ENCODE measurements at regions of chr3 and their contacts with region 1.

Region 1: DNA sequence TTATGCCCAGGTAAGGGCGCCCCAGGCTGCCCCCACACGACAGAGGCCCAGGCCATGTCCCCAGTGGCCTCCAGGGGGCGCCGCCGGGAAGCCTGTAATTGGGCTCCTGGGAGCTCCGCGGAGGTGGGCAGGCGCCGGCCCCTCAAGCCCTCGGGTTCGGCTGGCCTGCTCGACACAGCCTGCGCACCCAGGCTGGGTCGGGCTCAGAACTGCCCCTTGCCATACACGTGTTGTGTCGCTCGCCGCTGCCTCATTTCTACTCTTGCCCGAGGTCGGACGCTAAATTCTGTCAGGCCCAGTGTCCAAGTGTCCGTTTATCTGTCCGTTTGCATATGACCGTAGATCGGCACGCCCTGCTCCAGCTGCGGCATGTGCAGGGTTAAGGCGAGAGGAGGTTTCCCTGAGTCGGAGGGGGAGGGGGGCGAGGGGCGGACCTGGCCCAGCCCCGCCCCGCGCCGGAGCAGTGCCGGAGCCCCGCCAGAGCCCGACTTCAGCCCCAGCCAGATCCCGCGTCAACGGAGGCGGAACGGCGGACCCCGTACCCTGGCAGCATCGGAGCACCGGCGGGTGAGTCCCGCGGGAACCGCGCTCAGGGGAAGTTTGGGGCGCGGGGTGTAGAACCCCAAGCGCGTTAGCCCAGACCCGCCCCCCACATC is at the start of gene KLHDC8B:
- DNase-seq: peak; percentile 59 to 98
- H3K4me3 ChIP-seq: peak within 1 kb of the TSS; percentile 66 to 94 (median 78)
- H3K27ac ChIP-seq: no peak within 1 kb of the TSS
- H3K4me1 ChIP-seq: peaks cover 0 to 29% (median 15%) of the 10 kb centered on the region in 4 experiments; a peak in 6 of 7 replicates
- H3K27me3 ChIP-seq: peaks cover 0 to 3% (median 0%) of the 10 kb centered on the region in 4 experiments; a peak in 2 of 7 replicates
- CTCF ChIP-seq: peak in 2 of 3 experiments; percentile 88 to 95; a peak in 3 of 4 replicates
- EP300 ChIP-seq: no peak
- POLR2A ChIP-seq: no peak
- RAD21 ChIP-seq: peak; percentile 72 to 85
- total RNA-seq, gene KLHDC8B: 15.8 and 18.1 TPM in 2 replicates

Region 2: GRCh38 chr3:48997714-48998641 is 173.3 kb before region 1 on chr3:
- CTCF ChIA-PET with region 1: no interaction called
- POLR2A ChIA-PET with region 1: no interaction called
- DNase-seq: peak in 1 of 2 experiments; percentile 63
- H3K4me3 ChIP-seq: no peak overlapping the region
- H3K27ac ChIP-seq: no peak overlapping the region
- H3K4me1 ChIP-seq: peaks cover 0 to 17% (median 7%) of the 10 kb centered on the region in 4 experiments; a peak in 5 of 7 replicates
- H3K27me3 ChIP-seq: no peaks in the 10 kb centered on the region
- CTCF ChIP-seq: no peak
- EP300 ChIP-seq: no peak
- POLR2A ChIP-seq: no peak
- RAD21 ChIP-seq: no peak

Region 3: GRCh38 chr3:49181351-49181750 is 10.1 kb after region 1 on chr3:
- CTCF ChIA-PET with region 1: interaction called, 17 read pairs
- POLR2A ChIA-PET with region 1: interaction called, 4 read pairs
- DNase-seq: no peak
- H3K4me3 ChIP-seq: no peak overlapping the region
- H3K27ac ChIP-seq: no peak overlapping the region
- H3K4me1 ChIP-seq: no peaks in the 10 kb centered on the region
- H3K27me3 ChIP-seq: no peaks in the 10 kb centered on the region
- CTCF ChIP-seq: no peak
- EP300 ChIP-seq: no peak
- POLR2A ChIP-seq: no peak
- RAD21 ChIP-seq: no peak

Region 4: GRCh38 chr3:49191741-49192140 is 20.5 kb after region 1 on chr3:
- CTCF ChIA-PET with region 1: interaction called, 12 read pairs
- POLR2A ChIA-PET with region 1: interaction called, 4 read pairs
- DNase-seq: no peak
- H3K4me3 ChIP-seq: no peak overlapping the region
- H3K27ac ChIP-seq: no peak overlapping the region
- H3K4me1 ChIP-seq: 0 out of 7 replicates have a peak, but pooled peaks cover 0 to 3% (median 0%) of the 10 kb centered on the region in 4 experiments
- H3K27me3 ChIP-seq: no peaks in the 10 kb centered on the region
- CTCF ChIP-seq: no peak
- EP300 ChIP-seq: no peak
- POLR2A ChIP-seq: no peak
- RAD21 ChIP-seq: no peak

Measured in H1 (cell line).